Activated naive CD4-positive, alpha-beta T cell treated with anti-CD3 and anti-CD28 coated beads for 36 hours (primary cell): ENCODE measurements at regions of chr6 and their contacts with region 1.

Region 1: DNA sequence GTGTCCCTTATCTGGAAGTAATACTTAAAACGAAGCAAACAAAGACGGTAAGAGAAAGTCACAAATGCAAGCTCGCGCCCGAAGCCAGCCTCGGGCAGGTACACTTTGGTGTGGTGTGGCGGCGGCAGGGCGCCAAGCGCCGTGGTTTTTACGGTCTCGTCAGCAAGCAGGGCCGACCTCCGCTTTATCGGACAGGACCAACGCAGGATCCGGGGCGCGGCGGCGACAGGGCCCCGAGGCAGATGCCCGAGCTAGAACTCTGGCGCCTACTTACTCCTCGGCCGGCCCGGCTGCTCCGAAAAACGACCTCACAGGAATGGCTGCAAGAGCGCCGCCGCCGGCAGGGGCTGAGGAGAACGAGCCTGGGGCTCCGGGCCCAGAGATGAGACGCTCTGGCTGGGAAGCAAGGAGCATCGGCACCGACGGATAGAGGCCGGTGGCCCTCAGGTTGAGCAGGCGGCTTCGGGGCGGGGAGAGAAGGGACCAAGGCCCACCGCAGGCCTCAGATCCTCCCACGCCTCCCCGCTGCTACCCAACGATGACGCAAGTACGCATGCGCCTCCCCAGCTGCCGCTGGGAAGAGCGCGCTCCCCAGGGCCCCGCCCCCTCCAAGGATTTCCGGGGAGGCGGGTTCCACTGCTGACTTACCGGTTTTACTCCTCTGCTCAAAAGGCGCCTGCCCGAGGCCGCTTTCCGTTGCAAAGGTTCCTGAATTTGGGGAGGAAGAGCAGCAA is 60.6 kb downstream of the FAM217A start:
- DNase-seq: peak; percentile 97
- H3K4me3 Mint-ChIP-seq: peak overlapping the region; percentile 82
- H3K27ac Mint-ChIP-seq: peak overlapping the region; percentile 92
- H3K4me1 Mint-ChIP-seq: peaks cover 57% of the 10 kb centered on the region
- H3K27me3 Mint-ChIP-seq: no peaks in the 10 kb centered on the region

Region 2: DNA sequence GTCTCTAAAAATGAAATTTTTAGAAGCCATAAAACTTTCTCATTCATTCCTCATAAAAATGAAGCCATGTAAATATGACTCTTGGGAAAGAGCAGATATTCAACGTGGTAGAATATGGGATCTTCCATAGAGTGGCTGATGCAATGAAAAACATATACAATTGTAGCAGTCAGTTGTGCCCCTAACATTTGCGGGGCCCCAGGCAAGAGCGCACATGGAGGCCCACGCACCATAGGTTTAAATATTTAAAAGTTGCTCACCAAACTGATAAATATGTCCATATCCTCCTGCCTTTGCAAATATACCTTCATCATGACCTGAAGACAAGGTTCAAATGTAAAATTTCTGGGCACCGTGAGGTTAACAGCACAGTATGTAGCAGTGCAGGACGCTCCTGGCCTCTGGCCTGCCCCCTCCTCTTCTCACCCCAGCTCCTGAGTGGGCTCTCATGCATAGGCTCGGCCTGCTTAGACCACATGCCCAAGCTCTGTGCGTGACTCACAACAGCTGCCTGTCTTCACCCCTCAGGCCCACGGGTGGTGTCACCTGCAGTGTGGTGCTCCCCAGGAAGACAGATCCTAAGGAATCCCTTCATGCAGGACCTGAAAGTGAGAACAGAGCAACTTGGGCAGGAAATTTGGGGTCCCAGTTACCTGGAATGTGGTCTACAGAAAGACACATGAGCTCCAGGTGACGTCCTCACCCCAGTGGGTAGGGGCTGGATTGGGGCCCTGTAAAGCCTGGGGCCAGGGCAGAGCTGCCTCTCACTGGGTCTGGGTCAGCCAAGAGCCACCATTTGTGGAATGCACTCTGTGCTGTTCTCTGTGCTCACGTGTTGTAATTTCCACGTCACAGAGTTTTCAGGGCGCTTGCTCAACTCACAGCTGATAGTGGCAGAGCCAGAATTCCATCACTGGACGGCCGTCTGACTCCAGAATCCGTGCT is 230.0 kb before region 1 on chr6:
- CTCF ChIA-PET with region 1: no interaction called
- intact Hi-C with region 1: no loop called
- DNase-seq: no peak
- H3K4me3 Mint-ChIP-seq: no peak overlapping the region
- H3K27ac Mint-ChIP-seq: no peak overlapping the region
- H3K4me1 Mint-ChIP-seq: no peaks in the 10 kb centered on the region
- H3K27me3 Mint-ChIP-seq: no peaks in the 10 kb centered on the region

Region 3: GRCh38 chr6:3800850-3801591 is 217.3 kb before region 1 on chr6:
- CTCF ChIA-PET with region 1: no interaction called
- intact Hi-C with region 1: no loop called
- DNase-seq: no peak
- H3K4me3 Mint-ChIP-seq: no peak overlapping the region
- H3K27ac Mint-ChIP-seq: no peak overlapping the region
- H3K4me1 Mint-ChIP-seq: no peaks in the 10 kb centered on the region
- H3K27me3 Mint-ChIP-seq: no peaks in the 10 kb centered on the region

Region 4: DNA sequence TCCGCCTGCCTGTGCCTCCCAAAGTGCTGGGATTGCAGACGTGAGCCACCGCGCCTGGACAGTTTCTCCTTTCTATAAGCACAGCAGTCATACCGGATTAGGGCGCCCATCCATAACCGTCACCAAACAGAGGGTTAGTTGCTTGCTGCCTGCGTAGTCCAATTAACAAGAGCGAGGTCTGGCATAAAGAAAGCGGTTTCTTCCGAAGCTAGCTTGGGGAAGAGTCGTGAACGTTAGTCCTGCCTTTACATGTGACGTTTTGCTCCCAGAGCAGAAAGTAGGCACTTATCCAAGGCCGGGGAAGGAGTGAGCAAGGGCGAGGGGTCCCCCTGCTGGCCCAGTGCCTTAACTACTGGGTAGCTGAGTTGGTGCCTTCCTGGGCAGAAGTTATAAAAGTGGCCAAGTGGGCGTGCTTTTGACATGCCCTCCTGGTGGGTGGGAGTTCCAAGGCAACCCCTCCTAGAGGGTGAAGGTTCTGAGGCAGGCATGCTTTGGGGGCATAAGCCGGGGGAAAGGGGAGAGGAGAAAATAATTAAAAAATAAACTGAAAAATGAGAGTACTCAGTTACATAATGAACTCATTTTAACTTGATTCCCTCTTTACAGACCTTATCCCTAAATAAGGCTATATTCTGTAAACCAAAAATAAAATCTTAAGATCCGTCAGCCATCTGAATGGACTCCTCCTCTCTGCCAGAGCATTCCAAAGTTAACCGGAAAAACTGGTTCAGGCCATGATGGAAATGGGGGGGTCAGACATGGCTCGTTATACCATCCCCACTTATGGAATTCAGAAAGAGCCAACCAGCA is 27.4 kb before region 1 on chr6:
- CTCF ChIA-PET with region 1: interaction called, 4 read pairs
- intact Hi-C with region 1: loop called (anchors 2 kb)
- DNase-seq: peak; percentile 85
- H3K4me3 Mint-ChIP-seq: peak overlapping the region; percentile 3
- H3K27ac Mint-ChIP-seq: no peak overlapping the region
- H3K4me1 Mint-ChIP-seq: peaks cover 6% of the 10 kb centered on the region
- H3K27me3 Mint-ChIP-seq: no peaks in the 10 kb centered on the region

Region 5: GRCh38 chr6:4036581-4036980 is 18.2 kb after region 1 on chr6:
- CTCF ChIA-PET with region 1: no interaction called
- intact Hi-C with region 1: loop called (anchors 2 kb)
- DNase-seq: no peak
- H3K4me3 Mint-ChIP-seq: no peak overlapping the region
- H3K27ac Mint-ChIP-seq: peak overlapping the region; percentile 47
- H3K4me1 Mint-ChIP-seq: peaks cover 57% of the 10 kb centered on the region
- H3K27me3 Mint-ChIP-seq: no peaks in the 10 kb centered on the region

Region 6: GRCh38 chr6:4125500-4125899 is 107.2 kb after region 1 on chr6:
- CTCF ChIA-PET with region 1: no interaction called
- intact Hi-C with region 1: no loop called
- DNase-seq: no peak
- H3K4me3 Mint-ChIP-seq: no peak overlapping the region
- H3K27ac Mint-ChIP-seq: no peak overlapping the region
- H3K4me1 Mint-ChIP-seq: peaks cover 3% of the 10 kb centered on the region
- H3K27me3 Mint-ChIP-seq: no peaks in the 10 kb centered on the region

Region 7: DNA sequence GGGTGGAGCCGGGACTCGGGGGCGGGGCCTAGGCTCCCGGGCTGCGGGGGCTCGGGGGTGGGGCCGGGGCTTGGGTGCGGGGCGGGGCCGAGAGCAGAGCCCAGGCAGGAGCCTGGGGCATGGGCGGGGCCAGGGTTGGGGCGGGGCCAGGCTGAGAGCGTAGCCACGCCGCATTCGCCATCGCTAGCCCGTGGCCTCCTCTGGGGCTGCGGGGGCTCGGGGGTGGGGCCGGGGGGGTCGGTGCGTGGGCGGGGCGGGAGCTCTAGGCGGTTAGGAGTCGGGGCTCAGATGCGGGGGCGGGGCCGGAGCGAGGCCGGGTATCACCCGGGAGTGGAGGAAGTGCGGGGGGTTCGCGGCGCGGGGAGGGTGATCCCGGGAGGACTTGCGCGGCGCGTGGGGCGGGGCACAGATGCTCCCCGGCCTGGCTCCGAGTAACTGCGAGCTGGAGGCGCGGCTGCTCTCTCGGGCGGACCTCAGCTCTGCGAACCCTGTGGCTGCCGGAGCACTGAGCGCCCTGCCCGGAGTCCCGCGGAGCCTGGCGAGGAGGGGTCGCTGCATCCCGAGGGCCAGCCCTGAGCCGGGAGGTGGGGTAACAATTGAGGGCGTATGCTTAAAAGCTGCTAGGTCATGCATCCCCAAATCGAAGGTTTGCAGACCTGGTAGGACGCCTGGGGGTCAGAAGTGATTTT is 117.5 kb after region 1 on chr6:
- CTCF ChIA-PET with region 1: interaction called, 5 read pairs
- intact Hi-C with region 1: loop called (anchors 1 kb)
- DNase-seq: peak; percentile 92
- H3K4me3 Mint-ChIP-seq: peak overlapping the region; percentile 81
- H3K27ac Mint-ChIP-seq: peak overlapping the region; percentile 65
- H3K4me1 Mint-ChIP-seq: peaks cover 40% of the 10 kb centered on the region
- H3K27me3 Mint-ChIP-seq: no peaks in the 10 kb centered on the region